ENCODE measurements at regions of chr1 and their contacts with region 1.

Region 1: GRCh38 chr1:176897350-176898236 is 266.9 kb downstream of the ASTN1 start:
- DNase-seq: peak; percentile 55 to 81
- H3K4me3 ChIP-seq: peak overlapping the region; percentile 7 to 28 (median 18)
- H3K27ac ChIP-seq: no peak overlapping the region
- H3K4me1 ChIP-seq: peaks cover 0 to 9% (median 9%) of the 10 kb centered on the region in 4 donors
- H3K27me3 ChIP-seq: peaks cover 0 to 42% (median 12%) of the 10 kb centered on the region in 3 donors
- CTCF ChIP-seq: peak in 5 of 7 experiments; percentile 35 to 78 (median 48)
- EP300 ChIP-seq: no peak
- POLR2A ChIP-seq: no peak

Region 2: DNA sequence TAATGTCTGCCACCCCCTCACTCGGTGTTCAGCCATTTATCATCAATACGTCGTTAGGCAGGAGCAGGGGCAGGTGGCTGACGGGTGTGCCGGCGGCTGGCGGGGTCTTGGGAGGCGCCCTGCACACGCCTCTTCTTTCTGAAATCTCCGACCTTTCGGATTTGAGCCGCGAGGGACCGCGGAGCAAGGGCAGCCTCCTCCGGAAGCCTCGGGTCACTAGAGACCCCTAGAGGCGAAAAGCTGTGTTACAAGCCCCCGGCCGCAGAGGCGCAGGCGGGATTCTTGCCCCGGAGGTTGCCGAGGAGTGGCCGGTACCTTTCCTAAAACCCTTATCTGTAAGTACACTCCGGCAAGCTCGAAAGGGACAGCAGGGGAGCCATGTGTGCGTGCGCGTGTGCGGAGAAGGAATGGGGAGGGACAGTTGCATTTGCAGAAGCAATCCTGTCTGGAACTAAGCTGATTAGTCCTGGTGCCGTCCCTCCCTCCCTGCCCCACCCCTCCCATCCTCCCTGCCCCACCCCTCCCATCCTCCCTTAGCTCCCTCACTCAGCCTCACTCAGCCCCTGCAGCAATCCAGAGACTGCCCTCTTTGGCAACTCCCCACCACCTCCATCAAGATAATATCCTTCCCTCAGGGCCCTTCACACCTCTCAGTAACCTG is 284.2 kb after region 1 on chr1:
- intact Hi-C with region 1: loop called (anchors 10 kb)
- DNase-seq: peak; percentile 62 to 83
- H3K4me3 ChIP-seq: peak overlapping the region; percentile 15 to 28 (median 18)
- H3K27ac ChIP-seq: no peak overlapping the region
- H3K4me1 ChIP-seq: peaks cover 7 to 11% (median 9%) of the 10 kb centered on the region in 4 donors
- H3K27me3 ChIP-seq: peaks cover 0 to 34% (median 9%) of the 10 kb centered on the region in 3 donors
- CTCF ChIP-seq: peak in 5 of 7 experiments; percentile 2 to 73 (median 63)
- EP300 ChIP-seq: no peak
- POLR2A ChIP-seq: no peak

Measured in stomach (tissue), 19 donors.